ENCODE measurements at regions of chr18 and their contacts with region 1.

Region 1: GRCh38 chr18:60693426-60693825 is 320.9 kb upstream of the MC4R start:
- DNase-seq: no peak
- ATAC-seq: no peak
- H3K4me3 ChIP-seq: no peak overlapping the region
- H3K27ac ChIP-seq: no peak overlapping the region
- H3K4me1 ChIP-seq: no peaks in the 10 kb centered on the region
- H3K27me3 ChIP-seq: no peaks in the 10 kb centered on the region
- CTCF ChIP-seq: no peak

Region 2: GRCh38 chr18:60746491-60746890 is 53.1 kb after region 1 on chr18:
- intact Hi-C with region 1: no loop called
- DNase-seq: no peak
- ATAC-seq: no peak
- H3K4me3 ChIP-seq: no peak overlapping the region
- H3K27ac ChIP-seq: peak overlapping the region in 4 of 10 donors; percentile 3 to 14 (median 10)
- H3K4me1 ChIP-seq: peaks cover 0 to 22% (median 0%) of the 10 kb centered on the region in 9 donors
- H3K27me3 ChIP-seq: no peaks in the 10 kb centered on the region
- CTCF ChIP-seq: no peak

Region 3: DNA sequence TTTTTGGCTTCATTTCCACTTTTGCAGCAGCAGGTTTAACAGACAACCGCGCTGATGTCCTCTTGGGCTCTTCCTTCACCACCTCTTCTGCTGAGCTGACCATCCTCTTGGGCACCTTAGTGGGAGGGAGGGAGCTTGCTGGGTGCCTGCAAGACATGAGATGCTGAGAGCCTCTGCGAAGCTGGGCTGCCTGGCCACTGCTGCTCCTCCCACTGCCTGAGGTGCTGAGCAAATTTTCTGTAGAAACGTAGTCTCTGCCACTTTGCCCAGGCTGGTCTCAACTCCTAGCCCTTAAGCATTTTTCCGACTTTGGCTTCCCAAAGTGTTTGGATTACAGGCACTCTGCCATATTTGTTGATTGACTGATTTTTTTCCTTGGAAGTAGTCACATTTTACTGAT is 101.4 kb after region 1 on chr18:
- intact Hi-C with region 1: no loop called
- DNase-seq: no peak
- ATAC-seq: no peak
- H3K4me3 ChIP-seq: no peak overlapping the region
- H3K27ac ChIP-seq: no peak overlapping the region
- H3K4me1 ChIP-seq: no peaks in the 10 kb centered on the region
- H3K27me3 ChIP-seq: no peaks in the 10 kb centered on the region
- CTCF ChIP-seq: no peak

Region 4: DNA sequence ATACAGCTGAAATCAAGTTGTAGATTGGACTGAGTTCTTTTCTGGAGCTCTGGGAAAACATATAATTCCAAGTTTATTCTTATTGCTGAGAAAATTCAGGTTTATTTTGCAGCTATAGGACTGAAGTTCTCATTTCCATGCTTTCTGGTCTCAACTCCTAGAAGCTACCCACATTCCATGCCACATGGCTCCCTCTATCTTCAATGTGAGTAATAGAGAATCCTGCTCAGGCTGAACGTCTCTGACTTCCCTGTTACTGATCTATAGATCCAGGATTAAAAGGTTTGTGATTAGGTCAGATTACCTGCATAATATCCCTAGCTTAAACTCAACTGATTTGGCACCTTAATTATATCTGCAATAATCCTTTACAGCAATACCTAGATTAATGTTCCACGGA is 132.9 kb after region 1 on chr18:
- intact Hi-C with region 1: loop called in 3 of 10 experiments (anchors 10 kb)
- DNase-seq: no peak
- ATAC-seq: no peak
- H3K4me3 ChIP-seq: no peak overlapping the region
- H3K27ac ChIP-seq: no peak overlapping the region
- H3K4me1 ChIP-seq: no peaks in the 10 kb centered on the region
- H3K27me3 ChIP-seq: no peaks in the 10 kb centered on the region
- CTCF ChIP-seq: peak in 3 of 9 donors; percentile 14 to 24 (median 18)

Region 5: DNA sequence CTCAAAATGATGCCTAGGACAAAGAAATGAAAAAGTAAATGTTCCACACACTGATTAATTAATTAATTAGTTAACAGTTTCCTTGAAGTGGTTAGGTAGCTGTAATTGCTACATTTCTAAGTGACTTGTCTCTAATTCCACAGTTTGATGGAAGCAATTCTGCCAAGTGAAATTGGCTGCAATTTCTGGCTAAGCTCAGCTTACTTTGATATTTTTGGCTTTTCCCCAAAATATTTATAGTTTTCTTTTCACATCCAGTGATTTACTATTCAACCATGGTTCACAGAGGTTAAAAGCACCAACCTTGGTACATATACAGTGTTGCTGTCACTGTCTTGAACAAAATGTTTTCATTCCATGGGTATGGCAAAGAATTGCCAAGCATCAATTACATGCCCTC is 180.3 kb after region 1 on chr18:
- intact Hi-C with region 1: no loop called
- DNase-seq: no peak
- ATAC-seq: no peak
- H3K4me3 ChIP-seq: no peak overlapping the region
- H3K27ac ChIP-seq: no peak overlapping the region
- H3K4me1 ChIP-seq: no peaks in the 10 kb centered on the region
- H3K27me3 ChIP-seq: no peaks in the 10 kb centered on the region
- CTCF ChIP-seq: no peak